ENCODE measurements at regions of chr2 and their contacts with region 1.

Region 1: DNA sequence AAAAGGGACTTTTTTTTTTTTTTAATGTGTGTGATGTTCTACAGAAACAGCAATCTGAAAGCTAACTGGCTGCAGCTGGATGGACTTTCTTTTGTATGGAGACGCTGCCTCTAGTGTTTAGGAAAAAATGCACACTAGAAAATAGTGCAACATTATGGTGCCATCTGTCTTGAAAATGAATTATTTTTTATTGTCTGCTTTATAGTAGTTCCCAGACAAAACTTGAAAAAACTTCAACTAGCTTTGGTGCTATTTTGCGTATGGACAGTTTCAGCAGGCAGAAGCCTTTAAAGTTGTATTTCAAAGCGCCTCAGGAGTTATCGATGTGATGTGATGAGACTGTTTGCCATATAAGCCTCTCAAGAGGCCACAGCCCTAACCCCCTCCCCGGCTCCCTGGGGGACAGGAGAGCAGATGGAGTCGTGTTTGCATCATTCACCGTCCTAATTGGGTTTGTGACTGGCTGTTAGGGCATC is 86.9 kb downstream of the LTBP1 start:
- DNase-seq: no peak
- H3K4me3 ChIP-seq: no peak overlapping the region
- H3K27ac ChIP-seq: no peak overlapping the region
- H3K4me1 ChIP-seq: no peaks in the 10 kb centered on the region
- H3K27me3 ChIP-seq: no peaks in the 10 kb centered on the region
- CTCF ChIP-seq: peak; percentile 69

Region 2: GRCh38 chr2:32812316-32812715 is 221.3 kb before region 1 on chr2:
- CTCF ChIA-PET with region 1: no interaction called
- POLR2A ChIA-PET with region 1: interaction called, 10 read pairs
- intact Hi-C with region 1: no loop called
- DNase-seq: peak in 1 of 2 experiments; percentile 72
- H3K4me3 ChIP-seq: no peak overlapping the region
- H3K27ac ChIP-seq: peak overlapping the region; percentile 33
- H3K4me1 ChIP-seq: peaks cover 25% of the 10 kb centered on the region
- H3K27me3 ChIP-seq: no peaks in the 10 kb centered on the region
- CTCF ChIP-seq: no peak

Region 3: GRCh38 chr2:33372940-33373553 is 339.4 kb after region 1 on chr2:
- CTCF ChIA-PET with region 1: no interaction called
- POLR2A ChIA-PET with region 1: no interaction called
- intact Hi-C with region 1: loop called (anchors 2 kb)
- DNase-seq: peak in 1 of 2 experiments; percentile 14
- H3K4me3 ChIP-seq: no peak overlapping the region
- H3K27ac ChIP-seq: no peak overlapping the region
- H3K4me1 ChIP-seq: no peaks in the 10 kb centered on the region
- H3K27me3 ChIP-seq: no peaks in the 10 kb centered on the region
- CTCF ChIP-seq: peak; percentile 95

Region 4: DNA sequence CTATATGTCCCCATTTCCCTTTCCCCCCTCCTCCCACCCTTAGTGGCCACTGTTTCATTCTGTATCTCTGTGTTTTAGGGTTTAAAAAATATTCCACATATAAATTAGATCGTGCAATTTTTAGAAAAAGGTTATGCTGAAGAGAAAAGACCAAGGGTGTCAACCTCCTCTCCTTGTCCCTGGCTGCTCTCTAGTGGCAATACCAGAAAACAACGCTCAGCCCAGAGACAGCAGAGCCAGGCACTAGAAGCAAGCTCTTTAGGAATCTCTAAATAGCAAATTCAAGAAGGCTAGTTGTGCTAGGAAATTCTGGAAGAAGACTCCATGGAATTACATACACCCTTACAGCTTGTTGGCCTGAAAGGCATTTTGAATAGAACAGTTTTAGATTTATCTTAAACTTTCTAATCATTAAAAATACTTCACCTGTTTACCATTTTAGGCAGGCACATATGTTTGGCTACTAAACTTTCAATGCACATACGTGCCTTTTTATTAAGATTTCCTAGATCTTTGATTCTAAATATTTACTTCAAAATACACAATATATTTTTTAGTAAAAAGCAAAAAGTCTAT is 407.7 kb after region 1 on chr2:
- CTCF ChIA-PET with region 1: interaction called, 7 read pairs
- POLR2A ChIA-PET with region 1: no interaction called
- intact Hi-C with region 1: loop called (anchors 1 kb)
- DNase-seq: peak in 1 of 2 experiments; percentile 37
- H3K4me3 ChIP-seq: no peak overlapping the region
- H3K27ac ChIP-seq: no peak overlapping the region
- H3K4me1 ChIP-seq: no peaks in the 10 kb centered on the region
- H3K27me3 ChIP-seq: no peaks in the 10 kb centered on the region
- CTCF ChIP-seq: peak; percentile 77